Right cardiac atrium (tissue), 5 donors: ENCODE measurements at regions of chr12 and their contacts with region 1.

Region 1: GRCh38 chr12:48119078-48119833 is at the start of gene PFKM:
- DNase-seq: peak; percentile 86 to 92 (median 88)
- ATAC-seq: peak; percentile 99
- H3K4me3 ChIP-seq: peak within 1 kb of the TSS; percentile 88
- H3K27ac ChIP-seq: peak within 1 kb of the TSS; percentile 74
- H3K4me1 ChIP-seq: no peaks in the 10 kb centered on the region
- H3K27me3 ChIP-seq: no peaks in the 10 kb centered on the region
- total RNA-seq, gene PFKM: 322 to 429 (median 358) TPM

Region 2: GRCh38 chr12:48165094-48165981 is 46.1 kb after region 1 on chr12:
- intact Hi-C with region 1: loop called in 1 of 4 experiments (anchors 10 kb)
- DNase-seq: no peak
- ATAC-seq: peak in 1 of 2 donors; percentile 49
- H3K4me3 ChIP-seq: no peak overlapping the region
- H3K27ac ChIP-seq: no peak overlapping the region
- H3K4me1 ChIP-seq: peaks cover 2% of the 10 kb centered on the region
- H3K27me3 ChIP-seq: no peaks in the 10 kb centered on the region

Region 3: DNA sequence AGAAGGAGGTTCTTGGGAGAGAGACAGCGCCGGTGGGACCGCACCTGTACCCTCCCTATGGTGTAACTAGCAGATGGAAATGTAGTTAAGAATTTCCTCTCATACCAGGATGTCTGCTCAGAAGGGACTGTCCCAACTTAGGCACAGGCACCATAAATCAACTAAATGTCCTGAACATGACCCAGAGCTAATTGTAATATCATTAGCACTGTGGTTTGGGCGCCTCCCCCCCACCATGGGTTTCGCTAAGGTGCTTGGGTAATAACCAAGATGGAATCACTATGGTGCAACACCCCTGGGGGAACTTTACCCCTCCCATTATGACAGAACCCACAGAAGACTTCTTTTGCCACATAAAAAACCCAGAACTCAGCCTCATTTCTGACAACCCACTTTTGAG is 215.6 kb after region 1 on chr12:
- intact Hi-C with region 1: no loop called
- DNase-seq: no peak
- ATAC-seq: no peak
- H3K4me3 ChIP-seq: no peak overlapping the region
- H3K27ac ChIP-seq: no peak overlapping the region
- H3K4me1 ChIP-seq: no peaks in the 10 kb centered on the region
- H3K27me3 ChIP-seq: no peaks in the 10 kb centered on the region

Region 4: GRCh38 chr12:48459259-48459658 is 340.0 kb after region 1 on chr12:
- intact Hi-C with region 1: no loop called
- DNase-seq: no peak
- ATAC-seq: peak in 1 of 2 donors; percentile 35
- H3K4me3 ChIP-seq: no peak overlapping the region
- H3K27ac ChIP-seq: no peak overlapping the region
- H3K4me1 ChIP-seq: no peaks in the 10 kb centered on the region
- H3K27me3 ChIP-seq: no peaks in the 10 kb centered on the region